Naive thymus-derived CD8-positive, alpha-beta T cell (primary cell): ENCODE measurements at regions of chr3 and their contacts with region 1.

Region 1: GRCh38 chr3:111668912-111669488 is 73.9 kb upstream of the ZBED2 start:
- DNase-seq: peak in 4 of 10 donors; percentile 4 to 65 (median 62)
- ATAC-seq: peak; percentile 25 to 31
- H3K4me3 Mint-ChIP-seq: peak overlapping the region in 9 of 10 donors; percentile 8 to 70 (median 48)
- H3K27ac Mint-ChIP-seq: peak overlapping the region in 9 of 10 donors; percentile 56 to 92 (median 80)
- H3K4me1 Mint-ChIP-seq: peaks cover 28 to 76% (median 66%) of the 10 kb centered on the region in 4 donors
- H3K27me3 Mint-ChIP-seq: no peaks in the 10 kb centered on the region

Region 2: GRCh38 chr3:111639316-111639715 is 29.7 kb before region 1 on chr3:
- POLR2A ChIA-PET with region 1: no interaction called
- DNase-seq: no peak
- ATAC-seq: no peak
- H3K4me3 Mint-ChIP-seq: peak overlapping the region in 1 of 10 donors; percentile 24
- H3K27ac Mint-ChIP-seq: peak overlapping the region in 3 of 10 donors; percentile 15 to 75 (median 72)
- H3K4me1 Mint-ChIP-seq: peaks cover 0 to 10% (median 2%) of the 10 kb centered on the region in 4 donors
- H3K27me3 Mint-ChIP-seq: no peaks in the 10 kb centered on the region

Region 3: DNA sequence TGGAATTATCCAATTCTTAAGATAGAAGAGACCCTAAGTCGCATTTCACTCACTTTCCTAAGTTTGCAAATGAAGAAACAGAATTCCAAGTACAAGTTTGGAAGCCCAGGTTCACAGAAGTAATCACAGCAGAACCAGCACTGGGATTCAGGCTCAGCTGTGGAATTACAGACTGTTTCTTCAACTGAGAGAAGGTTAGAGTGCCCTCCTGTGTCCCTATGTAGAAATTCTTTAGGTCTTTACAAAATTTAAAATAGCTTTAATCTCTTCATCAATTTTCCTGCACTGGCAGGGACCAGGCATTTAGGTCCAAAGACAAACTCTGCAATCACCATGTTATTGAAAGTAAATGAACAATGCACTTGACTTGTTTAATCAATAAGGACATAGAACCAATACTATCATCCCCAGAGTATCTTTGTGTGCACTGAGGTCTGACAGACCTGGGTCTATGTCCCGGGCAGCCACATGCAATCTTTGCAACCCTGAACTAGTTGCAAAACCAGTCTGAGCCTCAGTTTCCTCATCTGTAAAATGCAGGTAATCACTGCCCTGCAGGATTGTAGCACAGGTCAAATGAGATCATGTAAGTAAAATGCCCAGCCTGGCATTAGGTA is 22.4 kb after region 1 on chr3:
- POLR2A ChIA-PET with region 1: interaction called, 14 read pairs
- DNase-seq: peak in 4 of 10 donors; percentile 9 to 45 (median 38)
- ATAC-seq: peak; percentile 61 to 63
- H3K4me3 Mint-ChIP-seq: no peak overlapping the region
- H3K27ac Mint-ChIP-seq: peak overlapping the region in 2 of 10 donors; percentile 5 to 71
- H3K4me1 Mint-ChIP-seq: peaks cover 18 to 73% (median 60%) of the 10 kb centered on the region in 4 donors
- H3K27me3 Mint-ChIP-seq: no peaks in the 10 kb centered on the region